HCT116 (cell line): ENCODE measurements at regions of chr20 and their contacts with region 1.

Region 1: GRCh38 chr20:38472513-38473372 is at the start of gene RALGAPB:
- DNase-seq: peak; percentile 98
- ATAC-seq: peak; percentile 96
- H3K4me3 ChIP-seq: peak within 1 kb of the TSS; percentile 76 to 90
- H3K27ac ChIP-seq: peak within 1 kb of the TSS; percentile 85
- H3K4me1 ChIP-seq: peaks cover 10 to 17% of the 10 kb centered on the region in 2 experiments; a peak in 3 of 4 replicates
- H3K27me3 ChIP-seq: no peaks in the 10 kb centered on the region
- CTCF ChIP-seq: peak in 2 of 3 experiments; percentile 40; a peak in 4 of 6 replicates
- POLR2A ChIP-seq: peak; percentile 86
- RAD21 ChIP-seq: peak; percentile 45; the same call in 1 of the 2 replicates
- total RNA-seq, gene RALGAPB: 24.0 TPM

Region 2: GRCh38 chr20:38434743-38435554 is 37.8 kb before region 1 on chr20 and contains the start of gene SNHG17:
- CTCF ChIA-PET with region 1: interaction called, 7 read pairs
- POLR2A ChIA-PET with region 1: interaction called, 13 read pairs
- RAD21 ChIA-PET with region 1: no interaction called
- intact Hi-C with region 1: no loop called
- DNase-seq: peak; percentile 87
- ATAC-seq: peak; percentile 84
- H3K4me3 ChIP-seq: peak within 1 kb of the TSS; percentile 77 to 99
- H3K27ac ChIP-seq: peak within 1 kb of the TSS; percentile 85
- H3K4me1 ChIP-seq: peaks cover 5 to 17% of the 10 kb centered on the region in 2 experiments
- H3K27me3 ChIP-seq: 0 out of 2 replicates have a peak, but pooled peaks cover 3% of the 10 kb centered on the region
- CTCF ChIP-seq: peak; percentile 90 to 100 (median 99)
- POLR2A ChIP-seq: peak; percentile 91
- RAD21 ChIP-seq: peak; percentile 50
- total RNA-seq, gene SNHG17: 65.7 TPM

Region 3: GRCh38 chr20:38446441-38447209 is 26.1 kb before region 1 on chr20:
- CTCF ChIA-PET with region 1: interaction called, 14 read pairs
- POLR2A ChIA-PET with region 1: interaction called, 13 read pairs
- RAD21 ChIA-PET with region 1: no interaction called
- intact Hi-C with region 1: no loop called
- DNase-seq: peak; percentile 89
- ATAC-seq: peak; percentile 93
- H3K4me3 ChIP-seq: peak overlapping the region; percentile 97 to 99
- H3K27ac ChIP-seq: peak overlapping the region; percentile 72
- H3K4me1 ChIP-seq: peaks cover 5 to 36% of the 10 kb centered on the region in 2 experiments; a peak in 3 of 4 replicates
- H3K27me3 ChIP-seq: no peaks in the 10 kb centered on the region
- CTCF ChIP-seq: peak; percentile 83 to 93 (median 93)
- POLR2A ChIP-seq: peak; percentile 85
- RAD21 ChIP-seq: peak; percentile 55

Region 4: GRCh38 chr20:38900606-38901005 is 427.9 kb after region 1 on chr20:
- CTCF ChIA-PET with region 1: no interaction called
- POLR2A ChIA-PET with region 1: no interaction called
- RAD21 ChIA-PET with region 1: no interaction called
- intact Hi-C with region 1: no loop called
- DNase-seq: no peak
- ATAC-seq: no peak
- H3K4me3 ChIP-seq: no peak overlapping the region
- H3K27ac ChIP-seq: no peak overlapping the region
- H3K4me1 ChIP-seq: no peaks in the 10 kb centered on the region
- H3K27me3 ChIP-seq: peaks cover 10% of the 10 kb centered on the region; the same call in 1 of the 2 replicates
- CTCF ChIP-seq: no peak
- POLR2A ChIP-seq: no peak
- RAD21 ChIP-seq: no peak